Activated CD4-positive, alpha-beta memory T cell treated with anti-CD3 and anti-CD28 coated beads for 36 hours (primary cell): ENCODE measurements at regions of chr3 and their contacts with region 1.

Region 1: GRCh38 chr3:42961633-42962032 is 17.5 kb upstream of the GASK1A start:
- DNase-seq: peak; percentile 15
- H3K4me3 Mint-ChIP-seq: no peak overlapping the region
- H3K27ac Mint-ChIP-seq: no peak overlapping the region
- H3K4me1 Mint-ChIP-seq: peaks cover 11% of the 10 kb centered on the region
- H3K27me3 Mint-ChIP-seq: peaks cover 3% of the 10 kb centered on the region

Region 2: DNA sequence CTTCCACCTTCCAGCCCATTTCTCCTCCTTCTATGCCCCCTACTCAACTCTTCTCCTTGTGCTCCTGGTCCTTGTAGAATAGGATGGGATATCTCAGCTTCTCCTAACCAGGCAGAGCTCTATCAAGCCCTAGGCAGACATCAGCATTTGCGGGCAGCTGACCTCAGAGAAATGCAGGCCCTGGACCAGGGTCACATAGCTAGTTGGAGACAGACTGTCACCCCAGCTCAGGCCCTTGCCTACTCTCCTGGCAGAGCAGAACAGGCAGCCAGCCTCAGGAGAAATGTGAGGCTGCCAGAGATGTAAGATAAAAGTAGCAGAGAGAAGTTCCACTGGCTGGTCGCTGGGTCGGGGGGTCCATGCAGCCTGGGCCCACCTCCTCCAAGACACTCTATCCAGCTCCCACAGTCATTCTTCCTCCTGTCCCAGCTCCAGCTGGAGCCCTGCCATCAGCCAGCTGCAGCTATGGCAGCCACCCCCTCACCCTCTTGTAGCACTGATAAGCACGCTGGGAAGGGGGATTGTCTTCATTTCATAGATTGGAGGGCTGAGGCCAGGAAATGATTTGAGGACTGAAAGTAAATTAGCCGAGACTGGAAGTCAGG is 89.9 kb before region 1 on chr3:
- CTCF ChIA-PET with region 1: no interaction called
- POLR2A ChIA-PET with region 1: no interaction called
- intact Hi-C with region 1: no loop called
- DNase-seq: no peak
- H3K4me3 Mint-ChIP-seq: no peak overlapping the region
- H3K27ac Mint-ChIP-seq: no peak overlapping the region
- H3K4me1 Mint-ChIP-seq: no peaks in the 10 kb centered on the region
- H3K27me3 Mint-ChIP-seq: no peaks in the 10 kb centered on the region

Region 3: GRCh38 chr3:42906070-42906847 is 55.4 kb before region 1 on chr3 and contains the start of gene ZNF662:
- CTCF ChIA-PET with region 1: no interaction called
- POLR2A ChIA-PET with region 1: no interaction called
- intact Hi-C with region 1: no loop called
- DNase-seq: peak; percentile 21
- H3K4me3 Mint-ChIP-seq: peak within 1 kb of the TSS; percentile 31
- H3K27ac Mint-ChIP-seq: no peak within 1 kb of the TSS
- H3K4me1 Mint-ChIP-seq: peaks cover 8% of the 10 kb centered on the region
- H3K27me3 Mint-ChIP-seq: peaks cover 35% of the 10 kb centered on the region
- total RNA-seq, gene ZNF662: 0.39 to 0.64 TPM

Region 4: GRCh38 chr3:42935472-42935871 is 26.2 kb before region 1 on chr3:
- CTCF ChIA-PET with region 1: no interaction called
- POLR2A ChIA-PET with region 1: no interaction called
- intact Hi-C with region 1: no loop called
- DNase-seq: no peak
- H3K4me3 Mint-ChIP-seq: no peak overlapping the region
- H3K27ac Mint-ChIP-seq: no peak overlapping the region
- H3K4me1 Mint-ChIP-seq: peaks cover 22% of the 10 kb centered on the region
- H3K27me3 Mint-ChIP-seq: no peaks in the 10 kb centered on the region

Region 5: GRCh38 chr3:43071313-43071893 is 109.8 kb after region 1 on chr3:
- CTCF ChIA-PET with region 1: interaction called, 44 read pairs
- POLR2A ChIA-PET with region 1: no interaction called
- intact Hi-C with region 1: loop called (anchors 10 kb)
- DNase-seq: peak; percentile 31
- H3K4me3 Mint-ChIP-seq: no peak overlapping the region
- H3K27ac Mint-ChIP-seq: no peak overlapping the region
- H3K4me1 Mint-ChIP-seq: peaks cover 3% of the 10 kb centered on the region
- H3K27me3 Mint-ChIP-seq: no peaks in the 10 kb centered on the region

Region 6: DNA sequence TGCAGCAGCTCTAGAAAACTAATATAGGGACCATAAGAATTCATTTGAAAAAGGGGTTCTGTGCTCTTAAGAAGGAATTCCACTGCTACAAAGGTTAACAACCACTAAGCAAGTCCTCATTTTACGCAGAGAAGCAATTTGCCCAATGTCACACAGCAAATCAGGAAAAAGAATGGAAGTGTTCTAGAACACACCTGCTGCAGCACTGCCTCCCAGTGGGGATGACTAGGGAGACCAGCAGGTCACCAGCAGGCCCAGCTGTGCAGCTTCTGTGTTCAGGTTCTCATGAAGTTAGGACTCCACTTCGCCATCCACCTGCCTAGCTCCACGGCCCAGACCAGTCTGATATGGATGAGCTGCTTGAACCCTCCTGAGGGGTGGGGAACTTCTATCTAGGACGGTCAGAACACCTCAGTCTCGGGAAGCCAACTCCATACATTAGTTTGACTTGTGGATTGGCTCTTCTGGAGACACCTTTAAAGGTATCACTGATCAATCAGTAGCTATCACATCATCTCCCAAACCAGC is 125.7 kb after region 1 on chr3:
- CTCF ChIA-PET with region 1: interaction called, 21 read pairs
- POLR2A ChIA-PET with region 1: no interaction called
- intact Hi-C with region 1: no loop called
- DNase-seq: no peak
- H3K4me3 Mint-ChIP-seq: no peak overlapping the region
- H3K27ac Mint-ChIP-seq: no peak overlapping the region
- H3K4me1 Mint-ChIP-seq: peaks cover 3% of the 10 kb centered on the region
- H3K27me3 Mint-ChIP-seq: no peaks in the 10 kb centered on the region

Region 7: GRCh38 chr3:43531835-43532234 is 570.2 kb after region 1 on chr3:
- CTCF ChIA-PET with region 1: no interaction called
- POLR2A ChIA-PET with region 1: no interaction called
- intact Hi-C with region 1: no loop called
- DNase-seq: peak; percentile 48
- H3K4me3 Mint-ChIP-seq: no peak overlapping the region
- H3K27ac Mint-ChIP-seq: no peak overlapping the region
- H3K4me1 Mint-ChIP-seq: no peaks in the 10 kb centered on the region
- H3K27me3 Mint-ChIP-seq: no peaks in the 10 kb centered on the region